ENCODE measurements at regions of chr12 and their contacts with region 1.

Region 1: DNA sequence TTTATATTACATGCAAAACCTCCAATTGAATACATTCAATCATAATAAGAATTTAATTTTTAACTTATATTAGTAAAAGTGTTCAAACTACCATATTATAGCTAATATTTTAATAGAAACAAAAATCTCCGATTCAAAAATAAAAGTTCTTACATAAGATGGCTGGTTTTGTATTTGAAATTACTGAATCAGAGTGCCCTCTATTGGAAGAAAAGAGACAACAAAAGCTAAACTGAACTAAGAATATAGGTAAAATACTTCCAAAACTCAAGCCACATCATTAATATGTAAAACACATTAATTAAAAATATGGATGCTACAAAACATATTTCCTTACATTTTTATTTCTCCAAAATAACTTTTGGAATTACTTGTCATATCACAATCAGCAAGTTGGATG is 120.3 kb downstream of the GARIN6 start:
- DNase-seq: no peak
- ATAC-seq: no peak
- H3K4me3 ChIP-seq: no peak overlapping the region
- H3K27ac ChIP-seq: no peak overlapping the region
- H3K4me1 ChIP-seq: no peaks in the 10 kb centered on the region
- H3K27me3 ChIP-seq: no peaks in the 10 kb centered on the region

Region 2: DNA sequence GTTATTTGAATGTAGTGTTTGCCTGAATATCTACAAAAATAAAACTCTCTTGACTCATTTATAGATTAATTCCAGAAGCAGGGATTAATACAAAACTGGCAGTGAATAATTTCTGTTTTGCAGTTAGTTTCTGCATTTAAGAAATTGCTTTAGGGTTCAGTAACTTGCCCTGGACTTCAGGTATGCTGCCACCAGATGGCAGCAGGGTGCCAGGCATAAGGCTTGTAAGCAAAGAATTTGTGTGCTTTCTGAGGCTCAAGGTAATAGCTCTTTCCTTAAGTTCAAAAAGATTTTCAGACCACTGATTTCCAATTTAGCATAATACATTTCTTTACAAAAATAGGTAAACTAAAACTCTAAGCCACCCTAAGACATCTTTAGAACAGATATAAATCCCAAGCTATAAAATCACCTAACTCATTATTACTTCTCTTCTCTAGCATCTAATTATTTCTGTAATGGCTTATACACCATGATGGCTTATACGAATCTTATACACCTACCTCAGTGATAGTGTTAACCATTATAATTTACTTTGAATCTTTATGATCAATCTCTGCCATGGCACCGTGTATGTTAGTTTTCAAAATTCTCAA is 724.4 kb before region 1 on chr12:
- intact Hi-C with region 1: loop called (anchors 2 to 5 kb)
- DNase-seq: peak; percentile 67 to 86
- ATAC-seq: no peak
- H3K4me3 ChIP-seq: no peak overlapping the region
- H3K27ac ChIP-seq: no peak overlapping the region
- H3K4me1 ChIP-seq: no peaks in the 10 kb centered on the region
- H3K27me3 ChIP-seq: no peaks in the 10 kb centered on the region

Region 3: GRCh38 chr12:99253068-99253467 is 514.7 kb before region 1 on chr12:
- intact Hi-C with region 1: loop called in 1 of 2 experiments (anchors 10 kb)
- DNase-seq: no peak
- ATAC-seq: no peak
- H3K4me3 ChIP-seq: no peak overlapping the region
- H3K27ac ChIP-seq: no peak overlapping the region
- H3K4me1 ChIP-seq: no peaks in the 10 kb centered on the region
- H3K27me3 ChIP-seq: no peaks in the 10 kb centered on the region

Region 4: GRCh38 chr12:99386907-99387306 is 380.9 kb before region 1 on chr12:
- intact Hi-C with region 1: loop called (anchors 5 to 10 kb)
- DNase-seq: no peak
- ATAC-seq: no peak
- H3K4me3 ChIP-seq: no peak overlapping the region
- H3K27ac ChIP-seq: no peak overlapping the region
- H3K4me1 ChIP-seq: peaks cover 0 to 2% of the 10 kb centered on the region in 2 donors
- H3K27me3 ChIP-seq: no peaks in the 10 kb centered on the region

Region 5: GRCh38 chr12:99455348-99456035 is 312.3 kb before region 1 on chr12:
- intact Hi-C with region 1: loop called (anchors 5 to 10 kb)
- DNase-seq: peak; percentile 60 to 64
- ATAC-seq: no peak
- H3K4me3 ChIP-seq: no peak overlapping the region
- H3K27ac ChIP-seq: no peak overlapping the region
- H3K4me1 ChIP-seq: no peaks in the 10 kb centered on the region
- H3K27me3 ChIP-seq: no peaks in the 10 kb centered on the region

Region 6: GRCh38 chr12:100142851-100143559 is 375.2 kb after region 1 on chr12 and contains the start of gene BLTP3B:
- intact Hi-C with region 1: no loop called
- DNase-seq: peak; percentile 94 to 98
- ATAC-seq: peak; percentile 98
- H3K4me3 ChIP-seq: peak within 1 kb of the TSS; percentile 92 to 93
- H3K27ac ChIP-seq: peak within 1 kb of the TSS; percentile 91 to 99
- H3K4me1 ChIP-seq: peaks cover 4 to 12% of the 10 kb centered on the region in 2 donors
- H3K27me3 ChIP-seq: no peaks in the 10 kb centered on the region
- total RNA-seq, gene BLTP3B: 40.8 to 57.2 TPM

Measured in aorta (tissue), 5 donors.